ENCODE measurements at regions of chr9 and their contacts with region 1.

Region 1: GRCh38 chr9:131618071-131618479 is 72.8 kb downstream of the PRRT1B start:
- DNase-seq: peak; percentile 87

Region 2: GRCh38 chr9:131668439-131669268 is 50.6 kb after region 1 on chr9:
- intact Hi-C with region 1: loop called (anchors 5 kb)
- DNase-seq: no peak

Region 3: DNA sequence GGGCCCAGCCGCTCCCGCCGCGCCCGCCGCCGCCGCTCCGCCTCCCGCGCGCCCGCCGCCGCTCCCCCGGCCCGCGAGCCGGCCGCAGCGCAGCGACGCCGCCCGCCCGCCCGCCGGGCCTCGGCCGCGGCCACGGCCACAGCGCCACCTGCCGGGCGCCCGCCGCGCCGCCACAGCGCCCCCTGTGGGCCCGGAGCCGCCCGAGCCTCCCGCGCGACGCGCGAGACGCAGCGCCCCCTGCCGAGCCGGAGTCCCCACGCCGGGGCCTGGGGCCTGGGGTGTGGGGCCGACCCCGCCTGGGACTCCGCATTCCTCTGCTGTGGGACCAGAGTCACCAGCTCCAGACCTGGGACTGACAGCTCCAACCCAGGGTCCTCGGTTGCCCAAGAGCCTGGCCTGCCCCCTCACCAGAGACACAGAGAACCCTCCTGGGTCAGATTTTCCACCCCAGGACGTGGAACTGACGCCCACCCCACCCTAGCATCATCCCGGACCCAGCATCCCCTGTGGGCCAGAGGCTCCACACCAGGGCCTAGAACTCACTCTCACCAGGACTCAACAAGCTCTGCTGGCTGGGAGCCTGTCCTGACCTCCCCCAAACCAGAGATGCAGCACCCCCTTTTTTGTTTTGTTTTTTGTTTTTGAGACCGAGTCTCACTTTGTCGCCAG is 122.0 kb after region 1 on chr9 and contains the start of gene RAPGEF1:
- intact Hi-C with region 1: loop called (anchors 5 kb)
- DNase-seq: peak; percentile 93
- total RNA-seq, gene RAPGEF1: 115 TPM

Region 4: DNA sequence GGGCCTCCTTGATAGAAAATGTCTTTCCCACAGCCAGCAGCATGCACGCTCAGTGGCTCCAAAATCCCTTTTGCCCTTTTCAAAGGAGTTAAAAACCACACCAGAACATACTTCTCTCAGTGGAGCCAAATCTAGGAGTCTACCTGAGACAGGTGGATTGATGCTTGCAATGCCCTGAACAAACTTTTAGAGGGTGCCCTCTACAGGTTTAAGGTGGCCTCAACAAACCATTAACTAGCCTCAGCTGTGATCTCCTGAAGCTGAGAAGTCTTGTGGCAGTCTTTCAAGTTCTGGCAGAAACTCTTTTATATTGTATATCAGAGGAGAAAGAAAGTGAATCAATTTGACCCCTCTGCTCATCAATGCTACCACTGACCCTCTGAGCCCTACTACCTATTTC is 336.2 kb after region 1 on chr9:
- intact Hi-C with region 1: no loop called
- DNase-seq: no peak